ENCODE measurements at regions of chr3 and their contacts with region 1.

Region 1: DNA sequence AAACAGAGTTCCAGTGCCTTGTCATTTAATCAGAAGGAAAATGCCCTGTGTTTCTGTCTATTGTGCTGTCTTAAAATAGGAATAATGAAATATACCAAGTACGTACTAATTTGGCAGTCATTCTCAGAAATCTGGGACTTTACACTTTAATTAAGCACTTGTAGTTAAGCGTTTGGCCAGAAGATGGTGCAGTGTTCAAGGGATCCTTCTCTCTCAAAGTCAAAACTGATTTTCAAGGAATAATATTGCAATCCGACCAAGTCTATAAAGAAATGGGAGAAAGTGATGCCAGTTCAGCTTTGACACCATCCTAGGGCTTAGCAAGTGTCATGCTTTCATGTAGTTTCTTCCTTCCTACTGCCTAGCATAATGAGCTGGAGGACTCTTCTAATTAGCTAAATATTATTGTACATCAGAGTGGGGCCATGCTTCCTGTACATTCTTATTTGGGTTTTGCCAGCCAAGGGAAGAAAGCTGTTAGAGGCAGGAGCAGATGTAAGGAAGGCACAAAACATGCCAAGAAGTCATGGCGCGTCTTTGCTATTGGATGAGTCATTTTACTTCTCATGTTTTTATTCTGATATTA is 64.8 kb downstream of the SAMMSON start:
- DNase-seq: peak in 5 of 9 donors; percentile 4 to 12 (median 8)
- ATAC-seq: no peak
- H3K4me3 ChIP-seq: no peak overlapping the region
- H3K4me3 Mint-ChIP-seq: no peak overlapping the region
- H3K27ac ChIP-seq: no peak overlapping the region
- H3K27ac Mint-ChIP-seq: no peak overlapping the region
- H3K4me1 ChIP-seq: no peaks in the 10 kb centered on the region
- H3K4me1 Mint-ChIP-seq: no peaks in the 10 kb centered on the region
- H3K27me3 ChIP-seq: no peaks in the 10 kb centered on the region
- H3K27me3 Mint-ChIP-seq: peaks cover 0 to 15% (median 7%) of the 10 kb centered on the region in 5 donors

Region 2: GRCh38 chr3:69893274-69893673 is 171.0 kb before region 1 on chr3:
- CTCF ChIA-PET with region 1: no interaction called
- POLR2A ChIA-PET with region 1: no interaction called
- intact Hi-C with region 1: no loop called
- DNase-seq: no peak
- ATAC-seq: no peak
- H3K4me3 ChIP-seq: no peak overlapping the region
- H3K4me3 Mint-ChIP-seq: no peak overlapping the region
- H3K27ac ChIP-seq: no peak overlapping the region
- H3K27ac Mint-ChIP-seq: no peak overlapping the region
- H3K4me1 ChIP-seq: no peaks in the 10 kb centered on the region
- H3K4me1 Mint-ChIP-seq: no peaks in the 10 kb centered on the region
- H3K27me3 ChIP-seq: no peaks in the 10 kb centered on the region
- H3K27me3 Mint-ChIP-seq: peaks cover 0 to 5% (median 0%) of the 10 kb centered on the region in 5 donors

Region 3: DNA sequence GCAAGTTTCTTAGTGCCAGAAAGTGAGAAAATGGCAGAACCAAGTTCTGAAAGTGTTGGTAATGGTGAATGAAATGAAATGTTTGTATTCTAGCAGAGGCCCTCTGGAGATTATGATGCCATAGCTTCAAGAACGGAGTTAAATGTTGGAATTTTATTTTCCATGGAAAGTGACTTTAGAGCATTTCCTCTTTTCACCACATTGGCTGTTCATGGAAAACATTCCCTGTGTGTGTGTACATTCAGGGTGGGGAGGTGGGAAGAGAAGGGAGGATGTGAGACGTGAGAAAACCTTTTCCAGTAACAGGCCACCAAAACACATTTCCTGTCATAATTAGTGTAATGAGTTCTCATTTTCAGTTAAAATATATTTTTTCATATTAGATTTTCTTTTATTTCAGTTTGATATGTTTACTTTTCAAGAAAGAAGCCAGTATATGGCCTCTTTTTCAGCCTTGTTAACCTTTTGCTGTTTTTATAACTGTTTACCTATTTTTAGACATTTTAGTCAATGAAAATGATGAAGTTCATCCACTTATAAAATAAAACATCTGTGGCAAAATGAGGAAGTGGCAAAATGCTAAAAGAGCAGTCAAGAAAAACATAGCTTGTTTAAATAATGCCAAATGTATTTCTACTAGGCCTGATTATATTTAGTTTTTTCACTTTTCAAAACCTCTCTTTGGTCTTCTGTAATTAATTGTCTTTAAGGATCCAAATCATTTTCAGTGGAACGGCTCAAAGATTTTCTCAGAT is 43.2 kb before region 1 on chr3:
- CTCF ChIA-PET with region 1: no interaction called
- POLR2A ChIA-PET with region 1: no interaction called
- intact Hi-C with region 1: no loop called
- DNase-seq: no peak
- ATAC-seq: no peak
- H3K4me3 ChIP-seq: no peak overlapping the region
- H3K4me3 Mint-ChIP-seq: no peak overlapping the region
- H3K27ac ChIP-seq: no peak overlapping the region
- H3K27ac Mint-ChIP-seq: no peak overlapping the region
- H3K4me1 ChIP-seq: no peaks in the 10 kb centered on the region
- H3K4me1 Mint-ChIP-seq: no peaks in the 10 kb centered on the region
- H3K27me3 ChIP-seq: peaks cover 0 to 2% of the 10 kb centered on the region in 2 donors
- H3K27me3 Mint-ChIP-seq: peaks cover 0 to 9% (median 0%) of the 10 kb centered on the region in 5 donors

Region 4: GRCh38 chr3:71681224-71681668 is 1617.0 kb after region 1 on chr3:
- CTCF ChIA-PET with region 1: no interaction called
- POLR2A ChIA-PET with region 1: no interaction called
- intact Hi-C with region 1: loop called in 1 of 2 experiments (anchors 1 kb)
- DNase-seq: peak in 6 of 9 donors; percentile 12 to 54 (median 18)
- ATAC-seq: peak; percentile 60
- H3K4me3 ChIP-seq: no peak overlapping the region
- H3K4me3 Mint-ChIP-seq: no peak overlapping the region
- H3K27ac ChIP-seq: no peak overlapping the region
- H3K27ac Mint-ChIP-seq: peak overlapping the region in 4 of 9 donors; percentile 48 to 86 (median 60)
- H3K4me1 ChIP-seq: no peaks in the 10 kb centered on the region
- H3K4me1 Mint-ChIP-seq: peaks cover 0 to 22% (median 10%) of the 10 kb centered on the region in 7 donors
- H3K27me3 ChIP-seq: no peaks in the 10 kb centered on the region
- H3K27me3 Mint-ChIP-seq: no peaks in the 10 kb centered on the region

Region 5: GRCh38 chr3:71859123-71859519 is 1794.8 kb after region 1 on chr3:
- CTCF ChIA-PET with region 1: no interaction called
- POLR2A ChIA-PET with region 1: no interaction called
- intact Hi-C with region 1: loop called in 1 of 2 experiments (anchors 10 kb)
- DNase-seq: peak in 5 of 9 donors; percentile 25 to 61 (median 47)
- ATAC-seq: peak; percentile 91
- H3K4me3 ChIP-seq: no peak overlapping the region
- H3K4me3 Mint-ChIP-seq: no peak overlapping the region
- H3K27ac ChIP-seq: no peak overlapping the region
- H3K27ac Mint-ChIP-seq: no peak overlapping the region
- H3K4me1 ChIP-seq: peaks cover 0 to 3% of the 10 kb centered on the region in 2 donors
- H3K4me1 Mint-ChIP-seq: peaks cover 0 to 8% (median 5%) of the 10 kb centered on the region in 7 donors
- H3K27me3 ChIP-seq: no peaks in the 10 kb centered on the region
- H3K27me3 Mint-ChIP-seq: peaks cover 22 to 32% (median 29%) of the 10 kb centered on the region in 5 donors

Measured in naive thymus-derived CD4-positive, alpha-beta T cell (primary cell).